ENCODE measurements at regions of chr10 and their contacts with region 1.

Region 1: GRCh38 chr10:102432162-102432950 is at the start of gene CUEDC2:
- DNase-seq: peak; percentile 87 to 97 (median 92)
- ATAC-seq: peak; percentile 89 to 91
- H3K4me3 Mint-ChIP-seq: peak within 1 kb of the TSS; percentile 89 to 97 (median 94)
- H3K27ac Mint-ChIP-seq: peak within 1 kb of the TSS; percentile 89 to 99 (median 96)
- H3K4me1 Mint-ChIP-seq: peaks cover 29 to 57% (median 54%) of the 10 kb centered on the region in 4 donors
- H3K27me3 Mint-ChIP-seq: peaks cover 0 to 2% (median 0%) of the 10 kb centered on the region in 5 donors
- polyA plus RNA-seq, gene CUEDC2: 60.6 to 76.9 (median 70.8) TPM

Region 2: GRCh38 chr10:102394079-102394800 is 38.1 kb before region 1 on chr10:
- POLR2A ChIA-PET with region 1: interaction called, 11 read pairs
- DNase-seq: peak; percentile 96 to 100 (median 99)
- ATAC-seq: peak; percentile 77 to 80
- H3K4me3 Mint-ChIP-seq: peak overlapping the region; percentile 93 to 98 (median 96)
- H3K27ac Mint-ChIP-seq: peak overlapping the region; percentile 92 to 100 (median 100)
- H3K4me1 Mint-ChIP-seq: peaks cover 13 to 46% (median 41%) of the 10 kb centered on the region in 4 donors
- H3K27me3 Mint-ChIP-seq: no peaks in the 10 kb centered on the region

Region 3: GRCh38 chr10:102399217-102400089 is 32.9 kb before region 1 on chr10:
- POLR2A ChIA-PET with region 1: interaction called, 11 read pairs
- DNase-seq: peak; percentile 77 to 91 (median 88)
- ATAC-seq: peak; percentile 57 to 61
- H3K4me3 Mint-ChIP-seq: peak overlapping the region; percentile 63 to 81 (median 74)
- H3K27ac Mint-ChIP-seq: peak overlapping the region; percentile 32 to 100 (median 91)
- H3K4me1 Mint-ChIP-seq: peaks cover 12 to 44% (median 39%) of the 10 kb centered on the region in 4 donors
- H3K27me3 Mint-ChIP-seq: no peaks in the 10 kb centered on the region

Region 4: DNA sequence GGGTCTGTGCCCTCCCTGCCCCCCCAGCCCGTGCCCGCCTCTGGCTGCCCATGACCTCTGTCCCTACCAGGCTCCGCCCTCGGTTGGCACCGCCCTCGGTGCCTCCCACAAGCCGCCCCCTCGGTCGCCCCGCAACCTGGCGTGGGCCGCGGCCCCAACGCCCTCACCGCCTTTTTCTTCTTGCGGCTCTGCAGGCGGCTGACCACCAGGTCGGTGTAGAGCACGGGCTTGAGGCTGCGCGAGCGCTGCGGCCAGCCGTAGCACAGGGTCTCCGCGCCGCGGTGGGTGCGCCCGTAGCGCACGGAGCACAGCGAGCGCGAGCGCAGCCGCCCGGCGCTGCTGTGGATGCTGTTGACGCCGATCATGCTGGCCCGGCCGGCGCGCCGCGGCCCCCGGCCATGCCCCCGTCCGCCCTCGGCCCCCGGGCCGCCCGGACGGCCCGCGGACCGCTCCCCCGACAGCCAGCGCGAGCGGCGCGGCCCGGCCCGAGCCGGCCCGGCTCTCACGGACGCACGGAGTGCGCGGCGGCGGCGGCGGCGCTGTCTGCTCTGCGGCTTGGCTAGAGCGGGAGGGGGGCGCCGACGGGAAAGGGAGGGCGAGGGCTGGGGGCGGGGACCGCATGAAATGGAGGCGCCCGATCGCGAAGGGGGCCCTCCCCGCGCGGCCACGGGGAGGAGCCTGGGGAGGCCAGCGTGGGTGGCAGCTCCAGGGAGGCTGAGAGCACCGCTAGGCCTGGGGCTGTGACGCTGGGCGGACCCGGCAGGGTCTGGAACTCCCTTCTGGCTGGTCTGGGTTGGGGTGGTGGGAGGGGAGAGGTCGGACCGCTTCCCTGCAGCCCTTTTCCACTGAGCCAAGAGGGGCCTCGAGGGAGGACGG is 23.4 kb before region 1 on chr10:
- POLR2A ChIA-PET with region 1: interaction called, 14 read pairs
- DNase-seq: peak in 9 of 10 donors; percentile 60 to 91 (median 81)
- ATAC-seq: peak; percentile 75 to 81
- H3K4me3 Mint-ChIP-seq: peak overlapping the region; percentile 71 to 91 (median 86)
- H3K27ac Mint-ChIP-seq: peak overlapping the region; percentile 64 to 96 (median 89)
- H3K4me1 Mint-ChIP-seq: peaks cover 28 to 57% (median 40%) of the 10 kb centered on the region in 4 donors
- H3K27me3 Mint-ChIP-seq: peaks cover 0 to 27% (median 0%) of the 10 kb centered on the region in 5 donors

Region 5: DNA sequence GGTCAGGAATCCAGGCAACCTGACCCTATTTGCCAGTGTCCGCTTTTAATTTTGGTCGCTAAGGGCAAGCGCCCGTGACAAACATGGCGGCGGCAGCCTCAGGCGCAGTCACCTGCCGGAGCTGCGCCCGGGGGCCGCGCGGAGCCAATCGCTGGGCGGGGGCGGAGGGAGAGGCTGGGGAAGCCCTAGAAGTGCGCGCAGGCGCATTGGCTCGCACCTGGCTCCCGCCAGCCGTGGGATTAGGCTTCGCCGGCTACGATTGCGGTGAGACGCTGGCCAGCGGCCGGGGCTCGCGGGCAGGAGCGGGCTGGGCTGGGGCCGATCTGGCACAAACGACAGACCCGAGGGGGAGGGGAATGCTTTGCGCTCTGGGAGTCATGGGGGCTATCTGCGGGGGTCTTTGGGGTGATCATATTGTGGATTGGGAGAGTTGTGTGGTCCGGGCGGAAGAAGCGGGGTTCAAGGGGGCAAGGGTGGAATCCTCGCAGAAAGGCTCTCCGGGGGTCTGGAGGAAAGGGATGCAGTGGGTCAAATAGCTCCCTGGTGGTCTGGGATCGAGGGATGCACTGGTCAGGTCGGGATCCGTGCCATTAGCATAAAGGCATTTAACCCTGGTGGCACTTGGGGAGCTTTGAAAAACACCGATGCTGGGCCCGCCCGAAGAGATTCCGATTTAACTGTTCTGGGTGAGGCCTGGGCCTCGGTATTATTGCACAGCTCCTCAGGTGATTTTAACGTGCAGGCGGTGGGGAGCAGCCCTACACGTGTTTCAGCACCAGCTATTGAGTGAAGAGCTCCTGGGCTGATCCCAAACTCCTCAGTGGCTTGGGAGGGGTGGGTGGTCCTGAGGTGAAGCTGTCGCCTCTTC is 29.1 kb after region 1 on chr10:
- POLR2A ChIA-PET with region 1: interaction called, 20 read pairs
- DNase-seq: peak; percentile 85 to 95 (median 90)
- ATAC-seq: peak; percentile 99 to 100
- H3K4me3 Mint-ChIP-seq: peak overlapping the region; percentile 86 to 98 (median 92)
- H3K27ac Mint-ChIP-seq: peak overlapping the region; percentile 73 to 93 (median 86)
- H3K4me1 Mint-ChIP-seq: peaks cover 28 to 44% (median 32%) of the 10 kb centered on the region in 4 donors
- H3K27me3 Mint-ChIP-seq: peaks cover 0 to 1% (median 0%) of the 10 kb centered on the region in 5 donors

Region 6: GRCh38 chr10:102869258-102870198 is 437.2 kb after region 1 on chr10 and contains the start of gene AS3MT:
- POLR2A ChIA-PET with region 1: no interaction called
- DNase-seq: peak in 3 of 10 donors; percentile 0 to 12 (median 8)
- ATAC-seq: peak; percentile 62 to 81
- H3K4me3 Mint-ChIP-seq: peak within 1 kb of the TSS; percentile 28 to 81 (median 73)
- H3K27ac Mint-ChIP-seq: peak within 1 kb of the TSS in 1 of 10 donors; percentile 83
- H3K4me1 Mint-ChIP-seq: peaks cover 9 to 23% (median 14%) of the 10 kb centered on the region in 4 donors
- H3K27me3 Mint-ChIP-seq: peaks cover 18 to 26% (median 22%) of the 10 kb centered on the region in 5 donors
- polyA plus RNA-seq, gene AS3MT: not detected

Measured in naive thymus-derived CD8-positive, alpha-beta T cell (primary cell).